Naive thymus-derived CD4-positive, alpha-beta T cell (primary cell): ENCODE measurements at regions of chr9 and their contacts with region 1.

Region 1: GRCh38 chr9:121399883-121400607 is 30.0 kb upstream of the STOM start:
- DNase-seq: peak in 7 of 9 donors; percentile 25 to 67 (median 54)
- ATAC-seq: peak; percentile 66
- H3K4me3 ChIP-seq: no peak overlapping the region
- H3K4me3 Mint-ChIP-seq: no peak overlapping the region
- H3K27ac ChIP-seq: no peak overlapping the region
- H3K27ac Mint-ChIP-seq: no peak overlapping the region
- H3K4me1 ChIP-seq: no peaks in the 10 kb centered on the region
- H3K4me1 Mint-ChIP-seq: peaks cover 0 to 6% (median 0%) of the 10 kb centered on the region in 7 donors
- H3K27me3 ChIP-seq: no peaks in the 10 kb centered on the region
- H3K27me3 Mint-ChIP-seq: peaks cover 0 to 21% (median 0%) of the 10 kb centered on the region in 5 donors

Region 2: GRCh38 chr9:120619751-120620655 is 780.0 kb before region 1 on chr9:
- CTCF ChIA-PET with region 1: no interaction called
- POLR2A ChIA-PET with region 1: no interaction called
- intact Hi-C with region 1: loop called in 1 of 2 experiments (anchors 1 kb)
- DNase-seq: peak in 8 of 9 donors; percentile 22 to 59 (median 52)
- ATAC-seq: peak; percentile 94
- H3K4me3 ChIP-seq: no peak overlapping the region
- H3K4me3 Mint-ChIP-seq: no peak overlapping the region
- H3K27ac ChIP-seq: no peak overlapping the region
- H3K27ac Mint-ChIP-seq: no peak overlapping the region
- H3K4me1 ChIP-seq: peaks cover 0 to 3% of the 10 kb centered on the region in 2 donors
- H3K4me1 Mint-ChIP-seq: peaks cover 3 to 10% (median 7%) of the 10 kb centered on the region in 7 donors
- H3K27me3 ChIP-seq: no peaks in the 10 kb centered on the region
- H3K27me3 Mint-ChIP-seq: no peaks in the 10 kb centered on the region

Region 3: GRCh38 chr9:120755827-120756434 is 644.1 kb before region 1 on chr9:
- CTCF ChIA-PET with region 1: interaction called, 4 read pairs
- POLR2A ChIA-PET with region 1: no interaction called
- intact Hi-C with region 1: loop called in 1 of 2 experiments (anchors 1 kb)
- DNase-seq: peak; percentile 42 to 80 (median 65)
- ATAC-seq: peak; percentile 83
- H3K4me3 ChIP-seq: no peak overlapping the region
- H3K4me3 Mint-ChIP-seq: no peak overlapping the region
- H3K27ac ChIP-seq: peak overlapping the region; percentile 22
- H3K27ac Mint-ChIP-seq: peak overlapping the region in 8 of 9 donors; percentile 5 to 77 (median 42)
- H3K4me1 ChIP-seq: no peaks in the 10 kb centered on the region
- H3K4me1 Mint-ChIP-seq: peaks cover 3 to 16% (median 7%) of the 10 kb centered on the region in 7 donors
- H3K27me3 ChIP-seq: no peaks in the 10 kb centered on the region
- H3K27me3 Mint-ChIP-seq: no peaks in the 10 kb centered on the region

Region 4: GRCh38 chr9:121107041-121107440 is 293.0 kb before region 1 on chr9:
- CTCF ChIA-PET with region 1: no interaction called
- POLR2A ChIA-PET with region 1: no interaction called
- intact Hi-C with region 1: loop called in 1 of 2 experiments (anchors 1 kb)
- DNase-seq: peak in 7 of 9 donors; percentile 21 to 68 (median 55)
- ATAC-seq: peak; percentile 94
- H3K4me3 ChIP-seq: no peak overlapping the region
- H3K4me3 Mint-ChIP-seq: no peak overlapping the region
- H3K27ac ChIP-seq: no peak overlapping the region
- H3K27ac Mint-ChIP-seq: peak overlapping the region in 8 of 9 donors; percentile 36 to 88 (median 61)
- H3K4me1 ChIP-seq: no peaks in the 10 kb centered on the region
- H3K4me1 Mint-ChIP-seq: peaks cover 15 to 29% (median 27%) of the 10 kb centered on the region in 7 donors
- H3K27me3 ChIP-seq: no peaks in the 10 kb centered on the region
- H3K27me3 Mint-ChIP-seq: no peaks in the 10 kb centered on the region

Region 5: DNA sequence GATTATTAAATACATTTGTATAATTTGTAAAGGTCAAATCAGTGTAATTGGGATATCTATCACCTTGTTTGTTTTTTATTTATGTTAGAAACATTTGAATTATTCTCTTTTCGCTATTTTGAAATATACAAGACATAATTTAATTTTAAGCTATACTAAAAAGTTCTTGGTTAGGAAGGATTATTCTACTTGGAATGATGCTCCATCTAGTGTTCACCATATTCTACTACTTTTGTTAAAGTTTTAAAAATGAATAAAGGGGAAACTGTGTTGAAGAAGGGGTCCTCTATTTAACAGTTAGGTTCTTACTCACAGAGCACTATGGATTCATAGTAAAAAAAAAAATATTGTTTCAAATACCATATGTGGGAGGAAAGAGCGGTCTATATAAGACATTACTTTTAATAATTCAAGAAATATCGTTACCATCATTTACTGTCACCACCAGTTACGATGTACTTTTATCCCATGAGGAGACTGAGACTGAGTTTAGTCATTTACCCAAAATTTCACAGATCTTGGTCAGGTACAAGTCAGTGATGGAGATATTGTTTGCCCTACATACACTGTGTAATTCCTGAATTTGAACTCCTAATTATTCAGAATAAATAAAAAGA is 23.7 kb before region 1 on chr9:
- CTCF ChIA-PET with region 1: interaction called, 4 read pairs
- POLR2A ChIA-PET with region 1: no interaction called
- intact Hi-C with region 1: loop called in 1 of 2 experiments (anchors 2 kb)
- DNase-seq: no peak
- ATAC-seq: no peak
- H3K4me3 ChIP-seq: no peak overlapping the region
- H3K4me3 Mint-ChIP-seq: no peak overlapping the region
- H3K27ac ChIP-seq: no peak overlapping the region
- H3K27ac Mint-ChIP-seq: no peak overlapping the region
- H3K4me1 ChIP-seq: no peaks in the 10 kb centered on the region
- H3K4me1 Mint-ChIP-seq: peaks cover 0 to 17% (median 9%) of the 10 kb centered on the region in 7 donors
- H3K27me3 ChIP-seq: no peaks in the 10 kb centered on the region
- H3K27me3 Mint-ChIP-seq: peaks cover 0 to 9% (median 0%) of the 10 kb centered on the region in 5 donors

Region 6: GRCh38 chr9:121445981-121446380 is 45.9 kb after region 1 on chr9:
- CTCF ChIA-PET with region 1: no interaction called
- POLR2A ChIA-PET with region 1: no interaction called
- intact Hi-C with region 1: no loop called
- DNase-seq: no peak
- ATAC-seq: no peak
- H3K4me3 ChIP-seq: no peak overlapping the region
- H3K4me3 Mint-ChIP-seq: no peak overlapping the region
- H3K27ac ChIP-seq: no peak overlapping the region
- H3K27ac Mint-ChIP-seq: no peak overlapping the region
- H3K4me1 ChIP-seq: no peaks in the 10 kb centered on the region
- H3K4me1 Mint-ChIP-seq: peaks cover 3 to 13% (median 11%) of the 10 kb centered on the region in 7 donors
- H3K27me3 ChIP-seq: no peaks in the 10 kb centered on the region
- H3K27me3 Mint-ChIP-seq: peaks cover 6 to 70% (median 19%) of the 10 kb centered on the region in 5 donors